Lower leg skin (tissue), 4 donors: ENCODE measurements at regions of chr11 and their contacts with region 1.

Region 1: DNA sequence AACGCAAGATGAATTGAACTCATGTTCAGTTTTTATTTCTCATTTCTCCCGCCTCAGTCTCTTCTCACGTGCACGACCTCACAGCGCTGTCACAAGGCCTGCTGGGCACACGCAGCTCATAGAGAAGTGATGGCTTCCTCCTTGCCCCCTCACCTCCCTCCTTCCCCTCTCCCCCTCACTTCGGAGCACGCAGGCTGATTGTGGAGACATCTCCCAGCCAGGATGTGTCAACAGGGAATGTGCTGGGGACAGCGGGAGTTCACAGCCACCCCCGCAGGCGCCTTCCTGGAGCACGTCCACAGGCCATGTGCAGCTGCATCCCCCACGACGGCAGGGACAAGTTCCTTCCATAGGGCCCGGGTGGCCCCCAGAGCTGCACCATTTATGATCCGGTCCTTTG is 29.1 kb upstream of the KRTAP5-6 start:
- DNase-seq: peak in 1 of 2 donors; percentile 77
- H3K4me3 ChIP-seq: no peak overlapping the region
- CTCF ChIP-seq: no peak
- POLR2A ChIP-seq: no peak

Region 2: GRCh38 chr11:1682225-1682905 is 14.5 kb after region 1 on chr11:
- intact Hi-C with region 1: loop called (anchors 2 kb)
- DNase-seq: peak in 1 of 2 donors; percentile 56
- H3K4me3 ChIP-seq: no peak overlapping the region
- CTCF ChIP-seq: no peak
- POLR2A ChIP-seq: no peak